ENCODE measurements at regions of chr3 and their contacts with region 1.

Region 1: DNA sequence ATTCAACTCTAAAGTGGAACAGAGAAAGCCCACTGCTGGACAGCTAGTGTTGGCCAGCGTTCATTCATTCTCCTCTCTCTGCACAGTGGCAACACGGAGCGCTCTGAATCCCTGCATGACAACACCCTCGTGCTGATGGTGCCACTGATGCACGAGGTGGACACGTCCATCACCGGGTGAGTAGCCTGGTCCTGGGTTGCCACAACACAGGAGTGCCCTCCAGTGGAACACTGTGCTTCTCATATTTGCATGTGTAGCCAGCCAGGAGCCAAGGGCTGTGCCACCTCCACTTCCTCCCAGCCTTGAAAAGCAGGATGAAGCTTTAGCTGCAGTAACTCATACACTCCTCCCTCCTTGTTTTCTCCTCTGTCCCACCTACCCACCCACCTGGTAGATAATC is 120.0 kb upstream of the CTDSPL start:
- DNase-seq: peak; percentile 62 to 82 (median 72)
- ATAC-seq: peak; percentile 74 to 79 (median 76)
- H3K4me3 ChIP-seq: no peak overlapping the region
- H3K27ac ChIP-seq: peak overlapping the region in 5 of 12 donors; percentile 9 to 82 (median 54)
- H3K4me1 ChIP-seq: peaks cover 2 to 73% (median 28%) of the 10 kb centered on the region in 12 donors
- H3K27me3 ChIP-seq: no peaks in the 10 kb centered on the region
- CTCF ChIP-seq: peak in 11 of 12 donors; percentile 31 to 64 (median 53)
- POLR2A ChIP-seq: no peak

Region 2: GRCh38 chr3:37320276-37320675 is 421.4 kb before region 1 on chr3:
- intact Hi-C with region 1: no loop called
- DNase-seq: no peak
- ATAC-seq: no peak
- H3K4me3 ChIP-seq: no peak overlapping the region
- H3K27ac ChIP-seq: no peak overlapping the region
- H3K4me1 ChIP-seq: peaks cover 0 to 53% (median 18%) of the 10 kb centered on the region in 12 donors
- H3K27me3 ChIP-seq: no peaks in the 10 kb centered on the region
- CTCF ChIP-seq: no peak
- POLR2A ChIP-seq: no peak

Region 3: GRCh38 chr3:37537914-37538691 is 203.5 kb before region 1 on chr3:
- intact Hi-C with region 1: loop called in 3 of 10 experiments (anchors 2 to 10 kb)
- DNase-seq: peak in 2 of 5 donors; percentile 46 to 60
- ATAC-seq: peak in 3 of 4 donors; percentile 55 to 60 (median 56)
- H3K4me3 ChIP-seq: no peak overlapping the region
- H3K27ac ChIP-seq: peak overlapping the region in 10 of 12 donors; percentile 17 to 78 (median 61)
- H3K4me1 ChIP-seq: peaks cover 0 to 71% (median 25%) of the 10 kb centered on the region in 12 donors
- H3K27me3 ChIP-seq: no peaks in the 10 kb centered on the region
- CTCF ChIP-seq: no peak
- POLR2A ChIP-seq: no peak

Region 4: GRCh38 chr3:37546905-37547304 is 194.7 kb before region 1 on chr3:
- intact Hi-C with region 1: loop called in 2 of 10 experiments (anchors 2 to 5 kb)
- DNase-seq: peak in 3 of 5 donors; percentile 59 to 68 (median 59)
- ATAC-seq: peak; percentile 77 to 86 (median 84)
- H3K4me3 ChIP-seq: no peak overlapping the region
- H3K27ac ChIP-seq: peak overlapping the region in 8 of 12 donors; percentile 35 to 79 (median 61)
- H3K4me1 ChIP-seq: peaks cover 0 to 51% (median 26%) of the 10 kb centered on the region in 12 donors
- H3K27me3 ChIP-seq: no peaks in the 10 kb centered on the region
- CTCF ChIP-seq: peak; percentile 11 to 59 (median 40)
- POLR2A ChIP-seq: no peak

Region 5: DNA sequence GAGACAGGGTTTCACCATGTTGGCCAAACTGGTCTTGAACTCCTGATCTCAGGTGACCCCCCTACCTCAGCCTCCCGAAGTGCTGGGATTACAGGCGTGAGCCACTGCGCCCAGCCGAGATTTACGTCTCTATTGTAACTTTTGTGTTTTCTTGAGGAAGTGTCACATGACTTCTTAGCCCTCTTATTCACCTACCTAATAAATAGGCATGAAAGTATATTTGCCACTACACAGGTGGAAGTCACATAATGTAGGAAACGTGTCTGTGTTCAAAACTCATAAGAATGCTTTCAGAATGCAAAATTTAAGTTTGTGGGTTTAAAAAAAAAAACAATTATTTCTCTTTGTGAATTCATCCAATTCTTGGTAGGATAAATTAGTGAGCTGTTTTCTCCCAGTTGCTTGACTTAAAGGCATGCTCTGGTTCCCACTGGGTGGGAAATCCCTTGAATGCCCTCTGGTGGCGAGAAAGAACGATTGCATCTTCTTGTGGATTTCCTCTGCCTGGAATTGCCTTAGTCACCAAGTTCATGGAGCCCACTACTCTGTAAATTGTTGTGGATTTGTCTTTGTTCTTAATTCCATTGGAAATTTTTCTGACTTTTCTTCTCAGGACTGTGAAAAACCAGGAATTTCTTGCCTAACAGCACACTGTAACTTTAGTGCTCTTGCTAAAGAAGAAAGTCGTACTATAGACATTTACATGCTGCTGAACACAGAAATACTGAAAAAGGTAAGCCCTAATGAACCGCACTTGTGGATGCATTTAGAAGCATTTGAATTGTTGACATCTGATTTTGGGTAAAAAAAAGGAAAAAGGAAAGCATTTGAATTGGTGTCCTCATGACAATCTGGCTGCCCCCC is 37.9 kb after region 1 on chr3:
- intact Hi-C with region 1: loop called in 1 of 10 experiments (anchors 5 kb)
- DNase-seq: peak in 2 of 5 donors; percentile 48 to 51
- ATAC-seq: peak; percentile 56 to 82 (median 74)
- H3K4me3 ChIP-seq: no peak overlapping the region
- H3K27ac ChIP-seq: peak overlapping the region in 2 of 12 donors; percentile 3 to 40
- H3K4me1 ChIP-seq: peaks cover 0 to 29% (median 3%) of the 10 kb centered on the region in 12 donors
- H3K27me3 ChIP-seq: no peaks in the 10 kb centered on the region
- CTCF ChIP-seq: peak; percentile 75 to 92 (median 84)
- POLR2A ChIP-seq: no peak